Activated T-helper 1 cell treated with anti-CD3 and anti-CD28 coated beads, Interleukin-12 subunit alpha, Interleukin-12 subunit beta, Interleukin-2, Interleukin-4 antibody, amounts not matched to agents 30 ng/mL and 10 ng/mL and 1 ng/mL, durations not matched to agents 14 hours and 24 hours and 36 hours (primary cell): ENCODE measurements at regions of chr12 and their contacts with region 1.

Region 1: GRCh38 chr12:62361048-62361447 is 100.8 kb downstream of the USP15 start:
- DNase-seq: no peak
- H3K4me3 Mint-ChIP-seq: no peak overlapping the region
- H3K27ac Mint-ChIP-seq: no peak overlapping the region
- H3K4me1 Mint-ChIP-seq: peaks cover 20% of the 10 kb centered on the region
- H3K27me3 Mint-ChIP-seq: no peaks in the 10 kb centered on the region

Region 2: GRCh38 chr12:62158461-62159360 is 202.3 kb before region 1 on chr12:
- intact Hi-C with region 1: no loop called
- DNase-seq: no peak
- H3K4me3 Mint-ChIP-seq: no peak overlapping the region
- H3K27ac Mint-ChIP-seq: no peak overlapping the region
- H3K4me1 Mint-ChIP-seq: peaks cover 6% of the 10 kb centered on the region
- H3K27me3 Mint-ChIP-seq: no peaks in the 10 kb centered on the region

Region 3: DNA sequence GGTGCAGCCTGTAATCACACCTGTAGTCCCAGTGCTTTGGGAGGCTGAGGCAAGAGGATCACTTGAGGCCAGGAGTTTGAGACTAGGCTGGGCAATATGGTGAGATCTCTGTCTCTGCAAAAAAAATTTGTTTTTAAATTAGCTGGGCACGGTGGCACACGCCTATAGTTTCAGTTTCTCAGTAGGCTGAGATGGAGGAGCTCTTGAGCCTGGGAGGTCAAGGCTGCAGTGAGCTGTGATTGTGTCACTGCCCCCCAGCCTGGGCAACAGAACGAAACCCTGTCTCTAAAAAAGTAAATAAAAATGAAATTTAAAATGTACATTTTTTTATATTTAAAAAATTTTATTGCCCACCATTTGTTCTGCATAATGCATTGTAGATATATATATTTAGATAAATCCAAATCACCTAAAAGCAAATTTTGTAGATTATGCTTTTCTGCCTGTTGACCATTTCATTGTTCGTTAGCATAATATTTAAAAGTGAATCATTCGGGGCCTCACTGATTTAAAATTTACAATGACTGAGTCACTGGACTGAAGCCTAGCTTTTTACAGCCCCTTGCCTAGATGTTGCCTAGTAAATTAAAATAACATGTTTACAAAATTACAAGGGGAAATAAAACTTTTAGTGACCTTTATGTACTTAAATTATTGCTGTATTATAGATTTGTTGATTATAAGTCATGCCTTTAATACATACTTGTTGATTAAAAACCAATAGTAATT is 13.0 kb before region 1 on chr12:
- intact Hi-C with region 1: loop called (anchors 2 kb)
- DNase-seq: no peak
- H3K4me3 Mint-ChIP-seq: no peak overlapping the region
- H3K27ac Mint-ChIP-seq: no peak overlapping the region
- H3K4me1 Mint-ChIP-seq: peaks cover 7% of the 10 kb centered on the region
- H3K27me3 Mint-ChIP-seq: no peaks in the 10 kb centered on the region